H1 (cell line): ENCODE measurements at regions of chr3 and their contacts with region 1.

Region 1: DNA sequence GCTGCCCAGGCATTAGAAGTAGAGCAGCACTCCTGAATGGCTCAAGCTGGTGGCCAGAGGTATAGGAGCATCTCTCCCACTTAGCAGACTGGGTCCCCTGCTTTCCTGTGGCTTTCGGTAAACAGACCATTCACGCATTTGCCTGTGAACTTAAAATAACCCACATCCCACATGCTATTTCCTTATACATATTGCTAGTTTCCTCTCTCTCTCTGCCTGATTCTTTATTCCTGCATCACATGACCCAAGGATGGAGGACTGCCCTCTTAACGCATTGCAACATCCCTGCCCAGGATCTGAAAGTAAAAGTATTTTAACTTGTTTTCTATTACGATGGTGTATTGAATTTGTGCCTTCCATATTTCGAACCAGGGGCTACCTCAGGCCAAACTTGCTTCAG is 43.4 kb upstream of the NLGN1 start:
- DNase-seq: no peak
- H3K4me3 ChIP-seq: no peak overlapping the region
- H3K27ac ChIP-seq: no peak overlapping the region
- H3K4me1 ChIP-seq: peaks cover 0 to 6% (median 1%) of the 10 kb centered on the region in 4 experiments; a peak in 2 of 7 replicates
- H3K27me3 ChIP-seq: no peaks in the 10 kb centered on the region
- CTCF ChIP-seq: no peak
- EP300 ChIP-seq: no peak
- POLR2A ChIP-seq: no peak
- RAD21 ChIP-seq: no peak

Region 2: DNA sequence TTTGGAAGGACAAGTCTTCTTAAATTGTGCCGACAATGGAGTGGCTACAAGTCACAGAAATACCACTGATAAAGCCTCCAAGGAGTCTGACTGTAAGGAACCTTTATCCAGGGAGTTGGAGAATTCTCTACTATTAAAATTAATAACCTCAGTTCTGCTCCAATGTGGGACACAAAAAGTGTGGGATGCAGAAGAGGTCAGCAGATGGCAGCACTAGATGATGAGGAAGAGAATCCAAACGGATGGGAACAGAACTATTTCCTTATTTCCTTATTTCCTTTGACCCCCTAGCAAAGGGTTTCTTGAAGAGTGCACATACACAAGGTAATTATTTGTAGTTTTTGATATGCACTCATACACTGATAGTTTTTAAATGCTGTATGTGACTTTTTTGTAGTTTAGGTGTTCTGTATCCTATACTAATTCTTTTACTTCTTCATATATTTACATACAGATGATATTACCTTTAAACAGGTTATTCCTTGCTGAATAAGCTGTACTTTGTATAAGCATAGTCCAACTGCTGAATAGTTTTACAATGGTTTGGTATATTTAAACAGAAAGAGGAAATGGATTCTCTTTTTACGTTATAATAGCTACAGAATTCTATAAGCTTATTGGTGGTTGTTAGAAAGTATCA is 17.8 kb after region 1 on chr3:
- CTCF ChIA-PET with region 1: interaction called, 14 read pairs
- POLR2A ChIA-PET with region 1: no interaction called
- DNase-seq: peak in 1 of 2 experiments; percentile 52
- H3K4me3 ChIP-seq: no peak overlapping the region
- H3K27ac ChIP-seq: no peak overlapping the region
- H3K4me1 ChIP-seq: peaks cover 0 to 2% (median 0%) of the 10 kb centered on the region in 4 experiments; a peak in 1 of 7 replicates
- H3K27me3 ChIP-seq: no peaks in the 10 kb centered on the region
- CTCF ChIP-seq: peak in 2 of 3 experiments; percentile 39 to 72; a peak in 2 of 4 replicates
- EP300 ChIP-seq: no peak
- POLR2A ChIP-seq: no peak
- RAD21 ChIP-seq: peak; percentile 66 to 69